ENCODE measurements at regions of chr11 and their contacts with region 1.

Region 1: GRCh38 chr11:129223701-129224149 is 31.6 kb upstream of the ARHGAP32 start:
- DNase-seq: no peak
- ATAC-seq: peak; percentile 68 to 76
- H3K4me3 ChIP-seq: no peak overlapping the region
- H3K27ac ChIP-seq: no peak overlapping the region
- H3K4me1 ChIP-seq: no peaks in the 10 kb centered on the region
- H3K27me3 ChIP-seq: no peaks in the 10 kb centered on the region

Region 2: GRCh38 chr11:129323896-129324512 is 100.3 kb after region 1 on chr11:
- intact Hi-C with region 1: loop called in 1 of 4 experiments (anchors 10 kb)
- DNase-seq: peak in 2 of 3 donors; percentile 42 to 43
- ATAC-seq: peak; percentile 90 to 93
- H3K4me3 ChIP-seq: no peak overlapping the region
- H3K27ac ChIP-seq: peak overlapping the region; percentile 51
- H3K4me1 ChIP-seq: peaks cover 7% of the 10 kb centered on the region
- H3K27me3 ChIP-seq: no peaks in the 10 kb centered on the region

Region 3: DNA sequence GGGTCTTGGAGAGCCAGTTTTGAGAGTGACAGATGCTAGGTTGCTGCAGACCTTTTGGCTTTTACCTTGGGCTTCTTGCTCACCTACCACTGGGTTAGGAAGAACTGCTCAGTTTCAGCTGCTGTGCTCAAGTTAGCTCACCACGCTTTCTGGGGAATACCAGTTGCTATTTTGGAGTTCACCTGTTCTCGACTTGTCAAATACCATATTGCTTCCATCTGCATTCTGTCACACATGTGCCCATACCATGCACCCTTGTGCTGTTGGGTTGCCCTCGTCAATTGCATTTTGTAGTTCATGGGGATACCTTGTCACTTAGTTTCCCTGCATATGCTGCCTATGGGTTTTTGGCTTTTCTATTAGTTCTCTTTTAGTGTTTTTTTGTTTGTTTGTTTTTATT is 129.0 kb after region 1 on chr11:
- intact Hi-C with region 1: no loop called
- DNase-seq: no peak
- ATAC-seq: no peak
- H3K4me3 ChIP-seq: no peak overlapping the region
- H3K27ac ChIP-seq: no peak overlapping the region
- H3K4me1 ChIP-seq: no peaks in the 10 kb centered on the region
- H3K27me3 ChIP-seq: no peaks in the 10 kb centered on the region

Measured in right cardiac atrium (tissue), 5 donors.